HEK293 (cell line): ENCODE measurements at regions of chr1 and their contacts with region 1.

Region 1: GRCh38 chr1:22052115-22053016 is at the start of gene CDC42:
- H3K4me3 ChIP-seq: peak within 1 kb of the TSS; percentile 100
- H3K27ac ChIP-seq: peak within 1 kb of the TSS; percentile 94
- H3K4me1 ChIP-seq: peaks cover 6% of the 10 kb centered on the region
- CTCF ChIP-seq: no peak

Region 2: DNA sequence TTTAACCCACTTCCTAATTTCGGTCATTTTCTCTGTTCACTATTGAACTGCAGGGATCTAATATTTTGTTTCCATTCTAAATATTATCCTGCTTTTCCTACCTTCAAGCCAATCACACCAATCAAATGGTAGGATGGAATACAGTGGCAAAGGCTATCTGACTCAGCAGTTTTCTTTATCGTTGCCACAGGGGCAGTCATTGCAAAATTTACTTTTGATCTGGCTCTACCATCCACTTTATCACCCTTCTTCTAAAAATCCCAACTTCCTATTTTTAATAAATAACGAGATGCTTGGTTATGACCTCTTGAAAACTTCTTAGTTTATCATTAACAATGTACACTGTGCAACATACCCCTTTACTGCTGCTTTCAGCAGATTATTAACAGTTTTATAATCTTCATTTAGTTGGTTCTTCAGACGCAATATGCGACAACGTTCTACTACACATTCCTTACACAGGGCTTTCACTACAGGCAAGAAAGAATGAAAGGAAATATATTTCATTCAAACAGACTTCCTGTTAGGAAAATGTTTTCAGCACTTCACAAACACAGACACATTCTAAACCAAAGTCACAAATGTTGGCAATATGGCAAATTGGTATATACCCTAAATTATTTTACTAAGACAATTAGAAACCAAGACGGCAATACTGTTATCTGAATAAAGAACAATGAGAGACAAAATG is 330.9 kb before region 1 on chr1:
- CTCF ChIA-PET with region 1: no interaction called
- POLR2A ChIA-PET with region 1: no interaction called
- H3K4me3 ChIP-seq: no peak overlapping the region
- H3K27ac ChIP-seq: no peak overlapping the region
- H3K4me1 ChIP-seq: no peaks in the 10 kb centered on the region
- CTCF ChIP-seq: no peak

Region 3: GRCh38 chr1:22025368-22026155 is 26.8 kb before region 1 on chr1:
- CTCF ChIA-PET with region 1: interaction called, 3 read pairs
- POLR2A ChIA-PET with region 1: interaction called, 54 read pairs
- H3K4me3 ChIP-seq: peak overlapping the region; percentile 98
- H3K27ac ChIP-seq: peak overlapping the region; percentile 91
- H3K4me1 ChIP-seq: no peaks in the 10 kb centered on the region
- CTCF ChIP-seq: no peak

Region 4: GRCh38 chr1:22031214-22031962 is 21.0 kb before region 1 on chr1:
- CTCF ChIA-PET with region 1: interaction called, 3 read pairs
- POLR2A ChIA-PET with region 1: interaction called, 22 read pairs
- H3K4me3 ChIP-seq: no peak overlapping the region
- H3K27ac ChIP-seq: no peak overlapping the region
- H3K4me1 ChIP-seq: no peaks in the 10 kb centered on the region
- CTCF ChIP-seq: no peak

Region 5: GRCh38 chr1:22039594-22040285 is 12.6 kb before region 1 on chr1:
- CTCF ChIA-PET with region 1: interaction called, 5 read pairs
- POLR2A ChIA-PET with region 1: interaction called, 12 read pairs
- H3K4me3 ChIP-seq: no peak overlapping the region
- H3K27ac ChIP-seq: no peak overlapping the region
- H3K4me1 ChIP-seq: no peaks in the 10 kb centered on the region; the same call in 1 of the 2 replicates
- CTCF ChIP-seq: 0 out of 2 replicates have a peak, but pooled peaks have one; percentile 19